ENCODE measurements at regions of chr2 and their contacts with region 1.

Region 1: GRCh38 chr2:170651624-170652325 is 63.4 kb upstream of the SP5 start:
- DNase-seq: peak; percentile 75 to 85 (median 77)
- H3K4me3 ChIP-seq: no peak overlapping the region
- H3K4me3 Mint-ChIP-seq: peak overlapping the region in 7 of 8 donors; percentile 5 to 63 (median 21)
- H3K27ac ChIP-seq: no peak overlapping the region
- H3K27ac Mint-ChIP-seq: peak overlapping the region in 4 of 7 donors; percentile 3 to 54 (median 26)
- H3K4me1 ChIP-seq: peaks cover 23% of the 10 kb centered on the region
- H3K4me1 Mint-ChIP-seq: peaks cover 16 to 31% (median 26%) of the 10 kb centered on the region in 4 donors
- H3K27me3 ChIP-seq: no peaks in the 10 kb centered on the region
- H3K27me3 Mint-ChIP-seq: peaks cover 0 to 2% of the 10 kb centered on the region in 2 donors

Region 2: DNA sequence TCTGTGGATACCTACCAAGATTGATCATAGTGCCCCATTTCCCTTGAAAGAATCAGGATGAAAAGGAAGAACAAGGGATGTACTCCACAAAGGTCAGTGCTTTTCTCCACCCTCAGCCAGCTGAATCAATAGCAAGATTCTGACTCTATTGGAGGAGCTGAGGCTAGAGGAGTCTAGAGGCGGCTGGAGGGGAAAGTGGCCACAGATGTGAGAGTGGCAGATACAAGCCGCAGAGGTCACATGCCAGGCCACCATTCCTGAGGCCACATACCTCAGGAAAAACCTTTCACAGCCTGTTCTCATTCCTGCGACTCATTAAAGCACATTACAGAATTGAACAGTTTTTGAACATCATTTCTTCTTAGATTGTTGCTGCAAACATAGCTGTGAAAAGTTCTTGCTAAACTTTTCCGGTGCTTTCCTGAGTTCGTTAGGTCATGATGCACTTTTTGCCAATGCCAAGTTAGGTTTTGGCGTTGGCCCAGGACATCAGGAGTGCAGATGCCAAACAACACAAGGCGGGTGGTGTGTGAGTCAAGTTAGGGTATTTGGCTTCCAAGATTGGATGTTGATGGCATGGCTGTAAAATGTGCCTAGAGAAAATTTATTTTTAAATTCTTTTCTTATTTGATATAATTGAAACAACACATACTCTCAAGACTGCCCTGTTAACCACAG is 97.4 kb before region 1 on chr2:
- CTCF ChIA-PET with region 1: no interaction called
- POLR2A ChIA-PET with region 1: no interaction called
- intact Hi-C with region 1: no loop called
- DNase-seq: no peak
- H3K4me3 ChIP-seq: no peak overlapping the region
- H3K4me3 Mint-ChIP-seq: no peak overlapping the region
- H3K27ac ChIP-seq: no peak overlapping the region
- H3K27ac Mint-ChIP-seq: no peak overlapping the region
- H3K4me1 ChIP-seq: no peaks in the 10 kb centered on the region
- H3K4me1 Mint-ChIP-seq: no peaks in the 10 kb centered on the region
- H3K27me3 ChIP-seq: no peaks in the 10 kb centered on the region
- H3K27me3 Mint-ChIP-seq: peaks cover 1 to 3% of the 10 kb centered on the region in 2 donors

Region 3: DNA sequence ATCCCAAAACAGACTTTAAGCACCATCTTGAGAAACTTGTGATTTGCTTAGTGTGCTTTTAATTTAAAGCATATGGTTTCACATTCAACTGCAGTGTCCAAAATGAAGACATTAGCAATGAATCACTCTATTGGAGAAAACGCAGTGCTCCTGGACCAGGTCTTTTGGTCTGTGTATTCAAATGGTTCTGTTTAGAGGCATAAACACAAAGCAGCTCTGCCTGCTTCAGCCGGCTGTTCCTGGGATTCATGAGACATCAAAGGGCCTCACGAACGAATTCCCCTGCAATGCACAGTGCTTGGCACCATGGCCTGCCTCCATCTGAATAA is 53.7 kb before region 1 on chr2:
- CTCF ChIA-PET with region 1: no interaction called
- POLR2A ChIA-PET with region 1: no interaction called
- intact Hi-C with region 1: no loop called
- DNase-seq: no peak
- H3K4me3 ChIP-seq: no peak overlapping the region
- H3K4me3 Mint-ChIP-seq: no peak overlapping the region
- H3K27ac ChIP-seq: no peak overlapping the region
- H3K27ac Mint-ChIP-seq: no peak overlapping the region
- H3K4me1 ChIP-seq: no peaks in the 10 kb centered on the region
- H3K4me1 Mint-ChIP-seq: no peaks in the 10 kb centered on the region
- H3K27me3 ChIP-seq: no peaks in the 10 kb centered on the region
- H3K27me3 Mint-ChIP-seq: peaks cover 5 to 6% of the 10 kb centered on the region in 2 donors

Region 4: GRCh38 chr2:170665743-170666142 is 14.0 kb after region 1 on chr2:
- CTCF ChIA-PET with region 1: no interaction called
- POLR2A ChIA-PET with region 1: no interaction called
- intact Hi-C with region 1: no loop called
- DNase-seq: no peak
- H3K4me3 ChIP-seq: no peak overlapping the region
- H3K4me3 Mint-ChIP-seq: no peak overlapping the region
- H3K27ac ChIP-seq: no peak overlapping the region
- H3K27ac Mint-ChIP-seq: no peak overlapping the region
- H3K4me1 ChIP-seq: no peaks in the 10 kb centered on the region
- H3K4me1 Mint-ChIP-seq: no peaks in the 10 kb centered on the region
- H3K27me3 ChIP-seq: no peaks in the 10 kb centered on the region
- H3K27me3 Mint-ChIP-seq: peaks cover 11 to 12% of the 10 kb centered on the region in 2 donors

Region 5: DNA sequence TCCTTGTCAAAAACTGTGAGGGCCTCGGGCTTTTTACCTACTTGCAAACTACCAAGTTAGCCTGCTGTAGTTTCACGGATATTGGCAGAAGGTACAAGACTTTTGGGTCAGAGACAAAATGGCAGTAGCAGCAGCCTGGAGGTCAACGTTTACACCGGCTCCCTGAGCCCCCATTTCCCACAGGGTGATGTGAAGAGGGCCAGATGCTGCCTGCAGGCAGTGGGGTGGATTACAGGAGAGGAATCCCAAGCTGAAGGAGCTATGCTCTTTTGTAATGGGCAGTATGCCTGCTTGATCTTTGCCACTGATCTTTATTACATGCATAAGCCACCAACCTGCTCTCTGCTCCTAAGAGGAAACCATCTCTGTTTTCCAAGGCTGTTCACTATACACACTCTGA is 33.8 kb after region 1 on chr2:
- CTCF ChIA-PET with region 1: no interaction called
- POLR2A ChIA-PET with region 1: no interaction called
- intact Hi-C with region 1: no loop called
- DNase-seq: no peak
- H3K4me3 ChIP-seq: no peak overlapping the region
- H3K4me3 Mint-ChIP-seq: no peak overlapping the region
- H3K27ac ChIP-seq: no peak overlapping the region
- H3K27ac Mint-ChIP-seq: no peak overlapping the region
- H3K4me1 ChIP-seq: no peaks in the 10 kb centered on the region
- H3K4me1 Mint-ChIP-seq: no peaks in the 10 kb centered on the region
- H3K27me3 ChIP-seq: no peaks in the 10 kb centered on the region
- H3K27me3 Mint-ChIP-seq: peaks cover 3 to 4% of the 10 kb centered on the region in 2 donors

Region 6: DNA sequence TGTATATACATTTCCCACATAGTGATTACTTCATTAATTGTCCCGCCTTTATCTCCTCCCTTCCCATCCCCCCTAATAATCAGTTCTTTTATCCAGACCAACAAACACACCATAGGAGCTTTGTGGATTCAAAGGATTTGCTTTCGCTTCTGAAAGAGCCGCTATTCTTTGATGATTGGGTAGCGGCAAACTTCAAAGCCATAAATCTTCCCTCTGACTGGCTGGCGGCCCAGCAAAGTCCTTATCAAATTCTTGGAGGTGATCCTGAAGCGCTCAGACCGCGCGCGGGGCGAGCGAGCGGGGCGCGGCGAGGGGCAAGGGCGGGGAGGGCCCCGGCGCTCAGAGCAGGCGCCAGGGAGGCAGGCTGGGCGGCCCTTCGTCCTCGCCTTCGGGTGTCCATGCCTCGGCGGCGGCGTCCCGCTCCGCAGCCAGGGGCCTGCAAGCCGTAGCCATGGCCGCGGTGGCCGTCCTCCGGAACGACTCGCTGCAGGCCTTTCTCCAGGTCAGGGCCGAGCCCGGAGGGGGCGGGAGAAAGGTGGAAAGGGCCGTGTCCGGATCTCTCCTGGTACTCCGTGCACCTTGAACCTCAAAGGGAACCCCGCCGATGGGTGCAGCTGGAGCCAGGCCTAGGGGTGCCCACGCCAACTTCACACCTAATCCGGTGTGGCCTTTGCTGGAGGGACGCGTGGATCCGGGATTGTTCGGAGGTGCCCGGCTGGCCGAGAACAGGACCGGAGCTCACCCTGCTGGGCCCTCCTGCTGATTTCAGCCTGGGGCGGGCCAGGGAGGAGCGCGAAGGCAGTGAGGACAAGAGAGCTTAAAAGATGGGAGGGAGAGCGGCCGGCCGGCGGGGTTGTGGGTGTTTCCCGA is 63.5 kb after region 1 on chr2 and contains the start of gene SP5:
- CTCF ChIA-PET with region 1: no interaction called
- POLR2A ChIA-PET with region 1: no interaction called
- intact Hi-C with region 1: loop called (anchors 5 kb)
- DNase-seq: peak; percentile 45 to 65 (median 56)
- H3K4me3 ChIP-seq: peak within 1 kb of the TSS; percentile 44 to 69
- H3K4me3 Mint-ChIP-seq: peak within 1 kb of the TSS; percentile 84 to 95 (median 93)
- H3K27ac ChIP-seq: no peak within 1 kb of the TSS
- H3K27ac Mint-ChIP-seq: peak within 1 kb of the TSS in 4 of 7 donors; percentile 26 to 87 (median 54)
- H3K4me1 ChIP-seq: peaks cover 40% of the 10 kb centered on the region
- H3K4me1 Mint-ChIP-seq: peaks cover 17 to 45% (median 36%) of the 10 kb centered on the region in 4 donors
- H3K27me3 ChIP-seq: peaks cover 45% of the 10 kb centered on the region
- H3K27me3 Mint-ChIP-seq: peaks cover 47 to 52% of the 10 kb centered on the region in 2 donors
- total RNA-seq, gene SP5: not detected

Region 7: GRCh38 chr2:170770606-170771420 is 119.0 kb after region 1 on chr2:
- CTCF ChIA-PET with region 1: no interaction called
- POLR2A ChIA-PET with region 1: no interaction called
- intact Hi-C with region 1: loop called (anchors 5 kb)
- DNase-seq: peak; percentile 48 to 71 (median 62)
- H3K4me3 ChIP-seq: peak overlapping the region; percentile 63 to 87
- H3K4me3 Mint-ChIP-seq: peak overlapping the region; percentile 79 to 91 (median 88)
- H3K27ac ChIP-seq: no peak overlapping the region
- H3K27ac Mint-ChIP-seq: peak overlapping the region; percentile 14 to 79 (median 52)
- H3K4me1 ChIP-seq: peaks cover 11% of the 10 kb centered on the region
- H3K4me1 Mint-ChIP-seq: peaks cover 10 to 16% (median 11%) of the 10 kb centered on the region in 4 donors
- H3K27me3 ChIP-seq: no peaks in the 10 kb centered on the region
- H3K27me3 Mint-ChIP-seq: peaks cover 4 to 13% of the 10 kb centered on the region in 2 donors

Measured in CD4-positive, alpha-beta memory T cell (primary cell).